MCF 10A (cell line): ENCODE measurements at regions of chr5 and their contacts with region 1.

Region 1: GRCh38 chr5:143403593-143404415 is at the start of gene NR3C1:
- DNase-seq: peak; percentile 86
- H3K4me3 Mint-ChIP-seq: peak within 1 kb of the TSS; percentile 98
- H3K27ac Mint-ChIP-seq: peak within 1 kb of the TSS; percentile 99
- H3K4me1 Mint-ChIP-seq: peaks cover 29% of the 10 kb centered on the region
- H3K27me3 Mint-ChIP-seq: no peaks in the 10 kb centered on the region
- CTCF ChIP-seq: peak; percentile 59
- total RNA-seq, gene NR3C1: 92.9 and 113 TPM in 2 replicates

Region 2: DNA sequence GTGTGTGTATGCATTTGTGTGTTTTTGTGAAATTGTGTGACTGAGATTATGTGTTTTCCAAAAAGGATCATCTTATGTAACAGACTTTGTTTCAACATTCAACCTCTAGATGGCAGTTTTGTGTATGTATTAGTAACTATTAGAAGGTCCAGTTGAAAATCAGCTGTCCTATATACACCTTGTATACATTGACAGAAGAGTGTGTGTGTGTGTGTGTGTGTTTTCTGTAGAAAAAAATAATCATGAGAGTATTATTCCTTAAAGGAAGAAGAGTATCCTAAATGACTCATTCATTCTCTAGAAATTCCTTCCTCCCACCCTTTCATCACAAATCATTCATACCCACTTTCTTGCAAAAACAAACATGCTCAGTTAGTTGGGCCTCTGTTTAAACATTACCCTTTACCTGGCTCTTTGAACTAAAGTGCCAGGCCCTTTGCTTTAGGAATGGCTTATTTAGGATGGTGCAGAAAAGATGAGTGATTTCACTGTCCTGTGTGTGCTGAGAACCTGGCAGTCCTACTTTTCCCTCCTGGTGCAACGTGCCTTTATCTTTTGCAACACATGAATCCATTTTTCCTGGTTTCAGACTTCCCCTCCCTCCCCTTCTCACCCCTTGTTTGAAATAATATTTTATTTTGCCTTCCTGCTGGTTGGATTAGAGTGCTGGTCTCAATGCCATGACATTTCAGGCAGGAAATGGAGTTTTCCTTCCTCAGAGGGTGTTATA is 481.4 kb before region 1 on chr5:
- CTCF ChIA-PET with region 1: interaction called, 23 read pairs
- POLR2A ChIA-PET with region 1: interaction called, 20 read pairs
- intact Hi-C with region 1: loop called (anchors 1 kb)
- DNase-seq: peak; percentile 56
- H3K4me3 Mint-ChIP-seq: no peak overlapping the region
- H3K27ac Mint-ChIP-seq: no peak overlapping the region
- H3K4me1 Mint-ChIP-seq: peaks cover 25% of the 10 kb centered on the region
- H3K27me3 Mint-ChIP-seq: no peaks in the 10 kb centered on the region
- CTCF ChIP-seq: peak; percentile 68

Region 3: DNA sequence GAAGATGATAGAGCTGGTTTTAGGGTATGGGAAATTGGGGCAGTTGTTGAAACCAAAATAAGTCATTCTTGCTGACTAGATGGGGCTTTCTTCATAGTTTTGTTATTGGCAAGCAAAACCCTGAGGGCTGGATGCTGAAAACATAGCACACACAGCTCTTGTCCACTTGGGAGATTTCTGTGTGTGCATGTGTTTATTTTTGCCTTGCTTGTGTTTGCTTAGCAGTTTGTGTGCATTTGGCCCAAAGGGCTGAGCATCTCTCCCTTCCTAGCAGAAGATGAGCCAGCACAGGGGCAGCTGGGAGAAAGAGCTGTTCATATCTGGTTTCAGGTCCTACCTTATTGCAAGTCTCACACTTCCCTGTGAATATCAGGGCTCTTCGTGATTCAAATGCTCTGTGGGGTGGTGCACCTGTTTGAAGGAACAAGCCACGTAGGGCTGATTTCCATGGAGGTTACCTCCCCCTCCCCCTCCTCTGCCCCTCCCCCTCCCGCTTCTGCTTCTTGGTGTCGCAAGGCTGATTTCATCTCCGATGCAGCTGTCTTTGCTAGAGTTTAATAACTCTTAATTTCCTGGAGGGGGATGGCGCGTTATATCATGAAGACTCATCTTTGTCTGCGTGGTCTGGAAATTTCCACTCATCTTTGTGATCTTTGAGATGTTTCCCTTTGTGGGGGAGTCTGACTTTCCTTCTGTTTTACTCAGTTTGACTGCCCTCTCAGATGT is 337.1 kb before region 1 on chr5:
- CTCF ChIA-PET with region 1: no interaction called
- POLR2A ChIA-PET with region 1: interaction called, 14 read pairs
- intact Hi-C with region 1: no loop called
- DNase-seq: no peak
- H3K4me3 Mint-ChIP-seq: no peak overlapping the region
- H3K27ac Mint-ChIP-seq: no peak overlapping the region
- H3K4me1 Mint-ChIP-seq: peaks cover 32% of the 10 kb centered on the region
- H3K27me3 Mint-ChIP-seq: no peaks in the 10 kb centered on the region
- CTCF ChIP-seq: no peak

Region 4: GRCh38 chr5:143195491-143195890 is 208.3 kb before region 1 on chr5:
- CTCF ChIA-PET with region 1: interaction called, 4 read pairs
- POLR2A ChIA-PET with region 1: interaction called, 15 read pairs
- intact Hi-C with region 1: loop called (anchors 2 kb)
- DNase-seq: peak; percentile 80
- H3K4me3 Mint-ChIP-seq: no peak overlapping the region
- H3K27ac Mint-ChIP-seq: peak overlapping the region; percentile 60
- H3K4me1 Mint-ChIP-seq: peaks cover 35% of the 10 kb centered on the region
- H3K27me3 Mint-ChIP-seq: no peaks in the 10 kb centered on the region
- CTCF ChIP-seq: no peak

Region 5: DNA sequence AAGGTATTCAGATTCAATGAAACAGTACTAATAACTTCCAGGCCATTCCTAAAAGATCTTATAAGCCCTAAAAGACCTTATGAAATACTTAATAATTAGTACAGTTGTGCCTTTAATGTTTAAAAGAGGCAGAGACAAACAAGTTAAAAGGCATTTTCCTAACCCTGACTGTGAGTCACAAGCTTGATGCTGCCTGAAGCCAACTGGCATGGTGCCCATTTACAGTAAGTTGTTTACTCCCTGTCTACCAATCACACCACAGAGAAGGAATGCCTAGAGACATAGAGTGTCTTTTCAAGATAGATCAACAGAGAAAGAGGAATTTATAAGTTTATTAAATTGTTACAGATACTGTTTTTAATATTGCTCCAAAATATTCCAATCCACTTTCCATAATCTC is 48.1 kb before region 1 on chr5:
- CTCF ChIA-PET with region 1: interaction called, 4 read pairs
- POLR2A ChIA-PET with region 1: interaction called, 24 read pairs
- intact Hi-C with region 1: no loop called
- DNase-seq: peak; percentile 98
- H3K4me3 Mint-ChIP-seq: no peak overlapping the region
- H3K27ac Mint-ChIP-seq: peak overlapping the region; percentile 44
- H3K4me1 Mint-ChIP-seq: peaks cover 43% of the 10 kb centered on the region
- H3K27me3 Mint-ChIP-seq: no peaks in the 10 kb centered on the region
- CTCF ChIP-seq: no peak

Region 6: GRCh38 chr5:143554187-143554717 is 150.4 kb after region 1 on chr5:
- CTCF ChIA-PET with region 1: interaction called, 3 read pairs
- POLR2A ChIA-PET with region 1: interaction called, 21 read pairs
- intact Hi-C with region 1: no loop called
- DNase-seq: peak; percentile 99
- H3K4me3 Mint-ChIP-seq: peak overlapping the region; percentile 0
- H3K27ac Mint-ChIP-seq: peak overlapping the region; percentile 81
- H3K4me1 Mint-ChIP-seq: peaks cover 41% of the 10 kb centered on the region
- H3K27me3 Mint-ChIP-seq: no peaks in the 10 kb centered on the region
- CTCF ChIP-seq: no peak

Region 7: GRCh38 chr5:144170276-144171024 is 766.6 kb after region 1 on chr5 and contains the starts of genes KCTD16 and YIPF5:
- CTCF ChIA-PET with region 1: no interaction called
- POLR2A ChIA-PET with region 1: interaction called, 17 read pairs
- intact Hi-C with region 1: no loop called
- DNase-seq: peak; percentile 99
- H3K4me3 Mint-ChIP-seq: peak within 1 kb of the TSS; percentile 94
- H3K27ac Mint-ChIP-seq: peak within 1 kb of the TSS; percentile 97
- H3K4me1 Mint-ChIP-seq: peaks cover 37% of the 10 kb centered on the region
- H3K27me3 Mint-ChIP-seq: no peaks in the 10 kb centered on the region
- CTCF ChIP-seq: no peak
- total RNA-seq, gene KCTD16: 0.16 and 0.20 TPM in 2 replicates
- total RNA-seq, gene YIPF5: 88.7 and 115 TPM in 2 replicates